Activated T-helper 1 cell treated with anti-CD3 and anti-CD28 coated beads, Interleukin-12 subunit alpha, Interleukin-12 subunit beta, Interleukin-2, Interleukin-4 antibody, amounts not matched to agents 30 ng/mL and 10 ng/mL and 1 ng/mL, durations not matched to agents 14 hours and 24 hours and 36 hours (primary cell): ENCODE measurements at regions of chr12 and their contacts with region 1.

Region 1: DNA sequence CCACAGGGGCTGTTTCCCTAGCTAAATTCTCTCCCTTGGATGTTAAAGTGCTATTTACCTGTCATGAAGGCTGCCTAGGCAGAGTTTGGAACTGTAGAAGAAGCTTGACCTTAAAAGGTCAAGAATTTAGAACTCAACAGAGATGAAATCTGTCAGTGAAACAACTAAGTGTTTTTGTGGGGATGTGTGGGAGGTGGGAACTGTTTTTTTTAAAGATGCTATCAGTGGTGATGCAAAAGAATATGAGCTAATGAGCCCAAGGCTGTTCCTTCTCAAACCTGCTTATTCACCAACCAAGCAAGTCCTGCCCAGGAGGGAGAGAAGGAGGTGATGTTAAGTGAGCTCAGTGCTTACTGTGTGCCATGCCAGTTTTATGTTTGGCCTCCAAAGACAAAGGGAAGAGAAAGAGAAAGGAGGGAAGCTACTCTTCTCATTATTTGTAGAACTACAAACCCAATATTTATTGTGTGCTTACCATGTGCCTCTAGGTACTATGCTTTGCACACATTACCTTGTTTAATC is 40.8 kb upstream of the POC1B start:
- DNase-seq: no peak
- H3K4me3 Mint-ChIP-seq: no peak overlapping the region
- H3K27ac Mint-ChIP-seq: no peak overlapping the region
- H3K4me1 Mint-ChIP-seq: peaks cover 14% of the 10 kb centered on the region
- H3K27me3 Mint-ChIP-seq: peaks cover 5% of the 10 kb centered on the region

Region 2: GRCh38 chr12:89504560-89505346 is 61.9 kb before region 1 on chr12:
- intact Hi-C with region 1: no loop called
- DNase-seq: no peak
- H3K4me3 Mint-ChIP-seq: no peak overlapping the region
- H3K27ac Mint-ChIP-seq: no peak overlapping the region
- H3K4me1 Mint-ChIP-seq: peaks cover 15% of the 10 kb centered on the region
- H3K27me3 Mint-ChIP-seq: no peaks in the 10 kb centered on the region

Region 3: DNA sequence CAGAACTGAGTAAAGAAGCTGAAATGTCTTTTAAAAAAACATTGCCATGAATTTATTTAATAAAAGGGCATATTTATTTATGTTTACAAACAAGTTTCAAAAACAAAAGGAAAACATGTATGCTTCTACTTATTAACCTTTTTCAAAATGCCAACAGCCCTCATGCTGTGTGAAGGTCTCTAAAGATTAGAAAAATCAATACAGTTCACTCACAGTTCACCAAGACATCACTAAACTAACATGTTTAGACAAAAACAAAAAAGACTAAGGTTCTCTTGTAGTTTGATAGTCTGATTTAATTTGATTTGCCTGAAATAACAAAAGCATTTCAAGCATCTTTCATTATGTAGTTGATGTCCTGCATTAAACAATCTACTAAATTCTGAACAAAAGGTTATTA is 23.1 kb after region 1 on chr12:
- intact Hi-C with region 1: loop called (anchors 2 kb)
- DNase-seq: no peak
- H3K4me3 Mint-ChIP-seq: no peak overlapping the region
- H3K27ac Mint-ChIP-seq: no peak overlapping the region
- H3K4me1 Mint-ChIP-seq: no peaks in the 10 kb centered on the region
- H3K27me3 Mint-ChIP-seq: no peaks in the 10 kb centered on the region